GM18951 (cell line): ENCODE measurements at regions of chr5 and their contacts with region 1.

Region 1: GRCh38 chr5:41707853-41708603 is 162.2 kb downstream of the OXCT1 start:
- POLR2A ChIP-seq: no peak

Region 2: DNA sequence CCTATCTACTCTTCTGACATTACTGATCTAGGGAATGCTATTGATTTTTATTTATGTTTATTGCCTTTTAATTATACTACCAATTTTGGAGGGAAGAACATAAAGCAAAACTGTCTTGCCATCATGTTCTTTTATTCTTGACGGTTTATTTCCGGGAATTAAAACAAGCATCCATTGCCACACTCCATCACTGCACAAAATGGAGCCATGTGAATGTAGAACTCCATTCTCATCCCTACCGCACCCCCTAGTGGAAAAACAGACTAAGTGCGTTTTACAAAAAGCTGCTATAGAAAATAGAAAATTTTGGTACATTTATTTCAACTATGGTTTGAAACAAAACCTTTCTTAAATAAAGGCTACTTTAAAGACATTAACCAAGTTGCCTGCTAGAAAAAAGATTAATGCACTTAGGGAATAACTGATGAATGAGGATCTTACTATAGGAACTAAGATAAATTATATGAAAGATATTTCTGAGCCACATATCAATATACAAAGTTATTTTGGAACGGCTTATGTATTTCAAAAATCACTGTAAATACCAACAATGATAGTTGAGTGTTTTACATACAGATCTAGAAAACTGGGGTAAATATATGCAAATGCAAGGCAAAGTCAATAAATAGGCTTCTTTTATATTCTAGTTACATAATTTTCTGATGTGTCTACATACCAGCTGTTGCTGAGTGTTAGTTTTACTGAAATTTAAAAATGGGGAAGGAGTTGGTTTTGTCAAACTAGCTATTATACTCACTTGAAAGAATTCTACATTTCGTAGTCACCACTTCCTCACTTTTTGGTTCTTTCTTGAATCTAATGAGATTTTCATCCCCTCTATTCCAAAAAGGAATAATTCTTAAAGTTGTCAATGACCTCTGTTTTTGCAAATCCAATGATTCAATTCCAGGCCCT is 135.7 kb after region 1 on chr5:
- in situ Hi-C with region 1: loop called (anchors 5 kb)
- POLR2A ChIP-seq: no peak

Region 3: GRCh38 chr5:42064821-42065220 is 356.8 kb after region 1 on chr5:
- in situ Hi-C with region 1: loop called (anchors 10 kb)
- POLR2A ChIP-seq: no peak